ENCODE measurements at regions of chr7 and their contacts with region 1.

Region 1: GRCh38 chr7:106865130-106866041 is at the start of gene PIK3CG:
- DNase-seq: peak in 7 of 9 donors; percentile 43 to 77 (median 70)
- ATAC-seq: peak; percentile 96
- H3K4me3 ChIP-seq: peak within 1 kb of the TSS; percentile 62
- H3K4me3 Mint-ChIP-seq: peak within 1 kb of the TSS; percentile 86 to 98 (median 94)
- H3K27ac ChIP-seq: peak within 1 kb of the TSS; percentile 75
- H3K27ac Mint-ChIP-seq: peak within 1 kb of the TSS; percentile 90 to 96 (median 95)
- H3K4me1 ChIP-seq: peaks cover 50% of the 10 kb centered on the region in 2 donors
- H3K4me1 Mint-ChIP-seq: peaks cover 44 to 85% (median 72%) of the 10 kb centered on the region in 7 donors
- H3K27me3 ChIP-seq: no peaks in the 10 kb centered on the region
- H3K27me3 Mint-ChIP-seq: no peaks in the 10 kb centered on the region
- total RNA-seq, gene PIK3CG: 25.1 to 54.9 (median 30.6) TPM

Region 2: DNA sequence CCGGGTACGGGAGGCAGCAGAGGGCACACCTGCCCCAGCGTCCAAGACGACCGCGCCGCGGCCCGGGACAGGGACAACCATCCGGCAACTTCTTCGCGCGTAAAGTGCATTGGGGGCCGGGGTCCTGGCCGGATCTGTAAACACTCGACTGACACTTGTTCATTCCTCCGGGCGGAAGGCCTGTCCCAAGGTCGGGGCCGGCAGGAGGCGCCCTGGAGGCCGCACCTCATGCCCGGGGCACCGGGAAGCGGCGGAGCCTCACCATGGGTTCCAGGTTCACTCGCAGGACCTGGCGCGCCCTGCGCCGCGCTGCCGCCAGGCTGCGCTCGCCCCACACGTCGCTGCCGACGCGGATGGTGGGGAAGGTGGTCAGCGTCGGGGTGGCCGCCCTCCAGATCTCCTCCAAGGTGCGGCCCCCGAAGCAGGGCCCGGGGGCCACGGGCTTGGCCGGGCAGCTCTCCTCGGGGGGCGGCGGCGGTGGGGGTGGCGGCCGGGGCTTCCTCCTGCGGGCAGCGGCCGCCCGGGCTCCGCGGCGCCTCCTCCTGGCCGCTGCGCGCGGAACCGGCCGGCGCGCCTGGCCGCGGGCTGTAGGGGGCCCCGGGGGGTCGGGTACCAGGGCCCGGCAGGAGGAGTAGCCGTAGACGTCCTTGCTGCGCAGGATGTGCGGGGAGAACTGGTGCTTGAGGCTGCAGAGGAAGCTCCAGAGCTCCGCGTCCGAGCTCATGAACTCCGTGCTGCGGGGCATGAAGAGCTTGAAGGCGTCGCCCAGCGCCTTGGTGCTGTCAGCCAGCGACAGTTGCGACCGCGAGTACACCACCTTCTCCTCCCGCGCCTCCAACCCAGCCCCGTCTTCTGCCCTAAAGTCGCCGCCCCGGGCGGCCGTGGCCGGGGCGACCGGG is 205.2 kb before region 1 on chr7:
- CTCF ChIA-PET with region 1: interaction called, 5 read pairs
- POLR2A ChIA-PET with region 1: interaction called, 3 read pairs
- intact Hi-C with region 1: loop called in 1 of 2 experiments (anchors 2 kb)
- DNase-seq: peak; percentile 58 to 84 (median 68)
- ATAC-seq: peak; percentile 72
- H3K4me3 ChIP-seq: peak overlapping the region; percentile 73
- H3K4me3 Mint-ChIP-seq: peak overlapping the region; percentile 85 to 97 (median 91)
- H3K27ac ChIP-seq: peak overlapping the region; percentile 68
- H3K27ac Mint-ChIP-seq: peak overlapping the region; percentile 86 to 97 (median 92)
- H3K4me1 ChIP-seq: peaks cover 13 to 16% of the 10 kb centered on the region in 2 donors
- H3K4me1 Mint-ChIP-seq: peaks cover 0 to 41% (median 29%) of the 10 kb centered on the region in 7 donors
- H3K27me3 ChIP-seq: no peaks in the 10 kb centered on the region
- H3K27me3 Mint-ChIP-seq: peaks cover 0 to 3% (median 0%) of the 10 kb centered on the region in 5 donors

Region 3: DNA sequence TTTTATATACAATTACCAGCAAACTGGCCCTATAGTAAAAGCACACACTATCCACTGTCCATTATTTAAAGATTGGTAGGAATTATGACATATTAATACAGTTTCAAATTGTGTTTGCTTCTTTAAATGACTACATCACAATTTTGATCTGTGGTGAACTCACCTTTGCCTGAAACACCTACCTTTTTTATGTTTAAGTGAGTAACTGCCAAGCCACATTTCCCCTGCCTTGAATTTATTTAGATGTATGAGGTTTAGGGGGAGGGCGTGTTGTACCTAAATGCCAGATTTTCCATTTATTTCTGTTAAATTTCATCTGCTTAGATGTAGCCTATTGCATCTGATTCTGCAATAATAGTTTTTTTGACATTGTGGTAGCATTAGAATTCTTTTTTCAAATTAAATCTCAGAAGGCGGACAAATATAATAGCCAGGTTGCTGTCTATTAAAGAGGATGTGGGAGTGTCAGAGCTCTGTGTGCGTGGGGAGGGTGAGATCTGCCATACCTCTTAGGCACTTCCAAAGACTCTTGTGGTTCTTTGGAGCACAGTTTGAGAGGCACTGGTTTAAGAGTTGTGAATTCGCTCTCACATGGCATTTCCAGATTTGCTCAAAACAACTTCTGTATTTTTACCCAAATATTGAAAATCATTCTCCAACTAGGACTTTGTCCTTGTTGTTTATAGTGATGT is 13.5 kb after region 1 on chr7:
- CTCF ChIA-PET with region 1: no interaction called
- POLR2A ChIA-PET with region 1: interaction called, 3 read pairs
- intact Hi-C with region 1: loop called in 1 of 2 experiments (anchors 1 kb)
- DNase-seq: no peak
- ATAC-seq: no peak
- H3K4me3 ChIP-seq: no peak overlapping the region
- H3K4me3 Mint-ChIP-seq: peak overlapping the region in 6 of 10 donors; percentile 37 to 62 (median 48)
- H3K27ac ChIP-seq: peak overlapping the region; percentile 10
- H3K27ac Mint-ChIP-seq: peak overlapping the region in 7 of 9 donors; percentile 65 to 90 (median 72)
- H3K4me1 ChIP-seq: peaks cover 0 to 4% of the 10 kb centered on the region in 2 donors
- H3K4me1 Mint-ChIP-seq: peaks cover 20 to 57% (median 46%) of the 10 kb centered on the region in 7 donors
- H3K27me3 ChIP-seq: no peaks in the 10 kb centered on the region
- H3K27me3 Mint-ChIP-seq: no peaks in the 10 kb centered on the region

Region 4: DNA sequence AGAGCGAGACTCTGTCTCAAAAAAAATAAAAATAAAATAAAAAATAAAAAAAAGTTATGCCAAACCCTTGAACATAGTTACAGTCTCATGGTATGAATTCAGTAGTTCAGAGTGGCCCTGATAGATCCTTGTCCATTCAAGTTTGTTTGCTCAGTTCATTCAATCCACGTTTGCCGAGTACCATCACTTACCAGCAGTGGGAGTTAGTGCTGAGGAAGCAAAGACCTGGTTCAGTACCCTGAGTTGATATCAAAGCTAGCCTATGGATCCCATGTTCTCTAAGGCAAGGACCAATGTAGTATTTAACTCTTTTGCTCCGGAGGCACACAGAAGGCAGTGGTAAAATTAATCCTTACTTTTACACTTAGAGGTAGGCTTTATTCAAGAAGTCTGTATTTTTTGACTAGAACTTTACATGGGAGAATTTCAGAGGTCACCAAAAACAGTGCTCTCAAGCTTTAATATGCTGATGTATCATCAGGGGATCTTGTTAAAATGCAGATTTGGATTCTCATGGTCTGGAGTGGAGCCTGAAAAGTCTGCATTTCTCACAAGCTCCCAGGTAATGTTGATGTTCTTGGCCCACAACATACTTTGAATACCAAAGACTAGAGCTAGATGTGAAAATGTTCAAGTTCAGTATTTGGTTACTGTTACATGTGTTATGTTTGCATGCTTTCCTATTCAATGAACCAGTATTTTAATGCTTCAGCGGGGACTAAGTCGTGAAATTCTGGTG is 265.3 kb after region 1 on chr7:
- CTCF ChIA-PET with region 1: no interaction called
- POLR2A ChIA-PET with region 1: interaction called, 3 read pairs
- intact Hi-C with region 1: loop called (anchors 1 to 10 kb)
- DNase-seq: no peak
- ATAC-seq: no peak
- H3K4me3 ChIP-seq: no peak overlapping the region
- H3K4me3 Mint-ChIP-seq: no peak overlapping the region
- H3K27ac ChIP-seq: no peak overlapping the region
- H3K27ac Mint-ChIP-seq: no peak overlapping the region
- H3K4me1 ChIP-seq: peaks cover 3 to 12% of the 10 kb centered on the region in 2 donors
- H3K4me1 Mint-ChIP-seq: peaks cover 8 to 23% (median 18%) of the 10 kb centered on the region in 7 donors
- H3K27me3 ChIP-seq: no peaks in the 10 kb centered on the region
- H3K27me3 Mint-ChIP-seq: peaks cover 0 to 10% (median 0%) of the 10 kb centered on the region in 5 donors

Region 5: GRCh38 chr7:107450970-107451369 is 585.6 kb after region 1 on chr7:
- CTCF ChIA-PET with region 1: no interaction called
- POLR2A ChIA-PET with region 1: no interaction called
- intact Hi-C with region 1: no loop called
- DNase-seq: no peak
- ATAC-seq: no peak
- H3K4me3 ChIP-seq: no peak overlapping the region
- H3K4me3 Mint-ChIP-seq: no peak overlapping the region
- H3K27ac ChIP-seq: no peak overlapping the region
- H3K27ac Mint-ChIP-seq: no peak overlapping the region
- H3K4me1 ChIP-seq: no peaks in the 10 kb centered on the region
- H3K4me1 Mint-ChIP-seq: peaks cover 8 to 37% (median 26%) of the 10 kb centered on the region in 7 donors
- H3K27me3 ChIP-seq: no peaks in the 10 kb centered on the region
- H3K27me3 Mint-ChIP-seq: no peaks in the 10 kb centered on the region

Region 6: DNA sequence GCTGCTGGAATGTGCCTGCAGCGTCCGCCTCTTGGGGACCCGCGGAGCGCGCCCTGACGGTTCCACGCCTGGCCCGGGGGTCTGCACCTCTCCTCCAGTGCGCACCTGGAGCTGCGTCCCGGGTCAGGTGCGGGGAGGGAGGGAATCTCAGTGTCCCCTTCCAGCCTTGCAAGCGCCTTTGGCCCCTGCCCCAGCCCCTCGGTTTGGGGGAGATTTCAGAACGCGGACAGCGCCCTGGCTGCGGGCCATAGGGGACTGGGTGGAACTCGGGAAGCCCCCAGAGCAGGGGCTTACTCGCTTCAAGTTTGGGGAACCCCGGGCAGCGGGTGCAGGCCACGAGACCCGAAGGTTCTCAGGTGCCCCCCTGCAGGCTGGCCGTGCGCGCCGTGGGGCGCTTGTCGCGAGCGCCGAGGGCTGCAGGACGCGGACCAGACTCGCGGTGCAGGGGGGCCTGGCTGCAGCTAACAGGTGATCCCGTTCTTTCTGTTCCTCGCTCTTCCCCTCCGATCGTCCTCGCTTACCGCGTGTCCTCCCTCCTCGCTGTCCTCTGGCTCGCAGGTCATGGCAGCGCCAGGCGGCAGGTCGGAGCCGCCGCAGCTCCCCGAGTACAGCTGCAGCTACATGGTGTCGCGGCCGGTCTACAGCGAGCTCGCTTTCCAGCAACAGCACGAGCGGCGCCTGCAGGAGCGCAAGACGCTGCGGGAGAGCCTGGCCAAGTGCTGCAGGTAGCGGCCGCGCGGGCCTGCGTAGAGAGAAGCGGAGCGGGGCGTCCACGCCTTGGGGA is 795.9 kb after region 1 on chr7:
- CTCF ChIA-PET with region 1: no interaction called
- POLR2A ChIA-PET with region 1: no interaction called
- intact Hi-C with region 1: loop called in 1 of 2 experiments (anchors 10 kb)
- DNase-seq: peak in 7 of 9 donors; percentile 12 to 60 (median 14)
- ATAC-seq: peak; percentile 66
- H3K4me3 ChIP-seq: peak overlapping the region; percentile 30
- H3K4me3 Mint-ChIP-seq: peak overlapping the region; percentile 56 to 96 (median 84)
- H3K27ac ChIP-seq: no peak overlapping the region
- H3K27ac Mint-ChIP-seq: peak overlapping the region in 1 of 9 donors; percentile 87
- H3K4me1 ChIP-seq: peaks cover 0 to 2% of the 10 kb centered on the region in 2 donors
- H3K4me1 Mint-ChIP-seq: peaks cover 12 to 44% (median 21%) of the 10 kb centered on the region in 7 donors
- H3K27me3 ChIP-seq: peaks cover 3 to 19% of the 10 kb centered on the region in 2 donors
- H3K27me3 Mint-ChIP-seq: peaks cover 0 to 67% (median 49%) of the 10 kb centered on the region in 5 donors

Measured in naive thymus-derived CD4-positive, alpha-beta T cell (primary cell).